Prostate gland (tissue), 2 donors: ENCODE measurements at regions of chr13 and their contacts with region 1.

Region 1: DNA sequence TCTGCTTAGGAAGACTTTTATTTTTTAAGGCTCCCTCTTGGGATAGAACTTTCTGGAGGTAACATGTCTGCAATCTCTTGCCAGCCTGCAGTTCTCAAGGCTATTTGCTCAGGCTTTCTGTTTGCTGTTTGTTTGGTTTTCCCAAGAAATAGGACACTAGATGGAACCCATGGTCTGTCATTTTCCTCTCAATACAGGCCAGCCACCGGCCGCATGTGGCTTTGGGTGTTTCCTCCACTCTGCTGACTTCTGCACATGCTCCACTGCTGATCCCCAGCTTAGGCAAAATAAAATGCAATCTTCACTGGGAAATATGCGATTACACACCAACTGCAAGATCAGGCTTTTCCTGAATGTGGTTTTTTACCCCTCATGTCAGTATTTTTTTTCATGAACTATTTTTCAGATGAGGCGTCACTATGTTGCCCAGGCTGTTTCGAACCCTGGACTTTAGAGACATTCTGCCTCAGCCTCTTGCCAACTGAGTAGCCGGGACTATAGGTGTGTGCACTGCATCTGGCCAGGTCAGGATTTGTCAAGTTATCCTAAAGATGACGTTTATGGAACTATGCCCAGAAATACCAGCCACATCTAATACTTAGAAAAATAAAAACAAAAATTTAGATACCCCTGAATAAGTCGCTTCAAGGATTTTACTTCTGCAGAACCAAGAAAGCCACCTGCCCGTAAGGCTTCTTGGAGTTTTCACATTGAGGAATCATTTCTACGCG is 94.3 kb upstream of the PABPC3 start:
- DNase-seq: no peak
- H3K4me3 ChIP-seq: no peak overlapping the region
- H3K27ac ChIP-seq: no peak overlapping the region
- H3K4me1 ChIP-seq: no peaks in the 10 kb centered on the region
- H3K27me3 ChIP-seq: no peaks in the 10 kb centered on the region
- CTCF ChIP-seq: no peak
- POLR2A ChIP-seq: no peak

Region 2: DNA sequence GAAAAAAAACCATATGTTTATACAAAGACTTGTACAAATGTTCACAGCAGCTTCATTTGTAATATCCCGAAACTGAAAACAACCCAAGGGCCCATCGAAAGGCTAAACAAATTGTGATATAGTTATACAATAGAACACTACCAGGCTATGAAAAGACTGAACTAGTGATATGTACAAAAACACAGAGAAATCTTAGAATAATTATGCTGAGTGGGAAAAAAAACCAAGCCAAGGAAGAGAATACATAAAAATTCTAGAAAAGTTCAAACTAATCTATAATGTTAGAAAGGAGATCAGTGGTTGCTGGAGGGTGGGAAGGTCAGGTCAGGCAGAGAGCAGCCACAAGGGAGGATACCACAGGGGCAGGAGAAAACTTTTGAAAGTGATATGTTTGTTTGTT is 102.1 kb after region 1 on chr13:
- intact Hi-C with region 1: no loop called
- DNase-seq: no peak
- H3K4me3 ChIP-seq: no peak overlapping the region
- H3K27ac ChIP-seq: no peak overlapping the region
- H3K4me1 ChIP-seq: no peaks in the 10 kb centered on the region
- H3K27me3 ChIP-seq: no peaks in the 10 kb centered on the region
- CTCF ChIP-seq: no peak
- POLR2A ChIP-seq: no peak

Region 3: DNA sequence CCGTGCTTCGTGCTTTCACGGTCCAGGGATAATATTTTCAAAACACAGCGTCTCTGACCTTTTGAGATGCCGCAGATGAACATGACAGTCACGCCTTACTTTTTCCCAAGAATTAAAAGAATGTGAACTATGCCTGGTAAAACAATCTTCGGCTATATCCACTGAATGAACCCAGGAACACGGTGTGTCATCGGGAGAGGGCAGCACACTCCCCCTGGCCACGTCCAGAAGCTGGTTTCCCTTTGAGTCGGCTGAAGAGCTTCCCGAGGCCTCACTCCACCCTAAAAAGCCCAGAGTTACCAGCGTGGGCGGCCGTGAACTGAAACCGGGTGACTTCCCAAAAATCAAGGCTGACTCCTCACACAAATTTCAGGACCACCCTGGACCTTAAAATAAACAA is 1073.1 kb after region 1 on chr13:
- intact Hi-C with region 1: loop called (anchors 10 kb)
- DNase-seq: no peak
- H3K4me3 ChIP-seq: no peak overlapping the region
- H3K27ac ChIP-seq: no peak overlapping the region
- H3K4me1 ChIP-seq: no peaks in the 10 kb centered on the region
- H3K27me3 ChIP-seq: peaks cover 3% of the 10 kb centered on the region
- CTCF ChIP-seq: no peak
- POLR2A ChIP-seq: no peak